GM12878 (cell line): ENCODE measurements at regions of chr5 and their contacts with region 1.

Region 1: DNA sequence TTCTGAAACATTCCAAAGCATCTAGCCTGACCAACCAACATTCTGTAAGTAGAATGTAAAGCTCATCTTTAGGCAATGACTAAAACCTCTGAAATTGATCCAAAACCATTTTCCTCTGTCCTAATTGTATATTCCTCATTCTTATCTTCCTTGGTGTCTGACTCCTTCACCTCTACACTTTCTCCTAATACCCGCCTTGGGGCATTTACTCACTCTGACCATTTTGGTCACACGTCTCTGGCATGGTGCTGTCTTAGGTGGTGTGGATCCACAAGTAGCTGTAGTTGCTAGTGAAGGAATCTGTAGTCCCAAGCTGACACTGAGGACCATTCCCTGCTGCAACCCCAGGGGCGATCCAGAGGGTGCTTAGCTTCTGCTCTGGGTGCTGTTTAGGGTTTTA is 40.8 kb upstream of the LMNB1 start:
- DNase-seq: no peak
- ATAC-seq: peak; percentile 28; the same call in 2 of the 3 replicates
- H3K4me3 ChIP-seq: no peak overlapping the region
- H3K27ac ChIP-seq: no peak overlapping the region
- H3K4me1 ChIP-seq: 0 out of 2 replicates have a peak, but pooled peaks cover 6% of the 10 kb centered on the region
- H3K27me3 ChIP-seq: no peaks in the 10 kb centered on the region
- CTCF ChIP-seq: no peak
- EP300 ChIP-seq: no peak
- POLR2A ChIP-seq: no peak
- RAD21 ChIP-seq: no peak

Region 2: GRCh38 chr5:126628102-126628501 is 108.0 kb before region 1 on chr5:
- CTCF ChIA-PET with region 1: no interaction called
- POLR2A ChIA-PET with region 1: no interaction called
- RAD21 ChIA-PET with region 1: no interaction called
- SMC1A ChIA-PET with region 1: no interaction called
- in situ Hi-C with region 1: no loop called
- intact Hi-C with region 1: no loop called
- DNase-seq: no peak
- ATAC-seq: no peak
- H3K4me3 ChIP-seq: no peak overlapping the region
- H3K27ac ChIP-seq: no peak overlapping the region
- H3K4me1 ChIP-seq: no peaks in the 10 kb centered on the region
- H3K27me3 ChIP-seq: no peaks in the 10 kb centered on the region
- CTCF ChIP-seq: no peak
- EP300 ChIP-seq: no peak
- POLR2A ChIP-seq: no peak
- RAD21 ChIP-seq: no peak

Region 3: DNA sequence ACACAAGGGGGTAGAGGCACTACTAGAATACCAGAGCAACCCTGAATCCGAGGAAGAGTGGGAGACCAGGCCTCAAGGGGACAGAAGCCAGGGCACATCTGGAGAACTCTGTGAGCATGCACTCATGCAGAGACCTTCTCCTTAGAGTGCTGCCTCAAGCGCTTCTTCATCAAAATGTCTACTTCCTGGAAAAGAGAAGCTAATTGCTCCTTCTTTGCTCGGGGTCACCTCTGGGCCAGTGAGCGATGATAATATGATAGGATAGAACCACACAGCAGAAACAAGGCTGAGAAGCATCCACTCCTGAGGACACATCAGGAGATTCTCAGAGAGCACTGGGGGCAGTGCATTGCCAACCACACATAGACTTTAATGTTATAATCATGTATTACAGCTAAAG is 17.1 kb after region 1 on chr5:
- CTCF ChIA-PET with region 1: interaction called, 5 read pairs
- POLR2A ChIA-PET with region 1: no interaction called
- RAD21 ChIA-PET with region 1: interaction called, 13 read pairs
- SMC1A ChIA-PET with region 1: interaction called, 9 read pairs
- in situ Hi-C with region 1: no loop called
- intact Hi-C with region 1: no loop called
- DNase-seq: no peak
- ATAC-seq: no peak
- H3K4me3 ChIP-seq: no peak overlapping the region
- H3K27ac ChIP-seq: no peak overlapping the region
- H3K4me1 ChIP-seq: peaks cover 14% of the 10 kb centered on the region
- H3K27me3 ChIP-seq: no peaks in the 10 kb centered on the region
- CTCF ChIP-seq: no peak
- EP300 ChIP-seq: no peak
- POLR2A ChIP-seq: no peak
- RAD21 ChIP-seq: no peak

Region 4: DNA sequence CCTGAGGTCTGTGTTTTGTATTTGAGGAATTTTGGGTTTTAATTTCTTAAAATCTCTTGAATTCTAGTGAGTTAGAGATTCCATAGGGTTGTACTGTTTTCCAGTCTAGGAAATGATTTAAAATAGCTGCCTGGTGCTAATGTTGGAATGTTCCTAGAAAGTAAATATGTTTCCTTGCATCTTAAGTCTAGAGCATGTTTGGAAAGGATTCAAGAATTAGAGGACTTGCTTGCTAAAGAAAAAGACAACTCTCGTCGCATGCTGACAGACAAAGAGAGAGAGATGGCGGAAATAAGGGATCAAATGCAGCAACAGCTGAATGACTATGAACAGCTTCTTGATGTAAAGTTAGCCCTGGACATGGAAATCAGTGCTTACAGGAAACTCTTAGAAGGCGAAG is 82.6 kb after region 1 on chr5:
- CTCF ChIA-PET with region 1: no interaction called
- POLR2A ChIA-PET with region 1: no interaction called
- RAD21 ChIA-PET with region 1: no interaction called
- SMC1A ChIA-PET with region 1: no interaction called
- in situ Hi-C with region 1: no loop called
- intact Hi-C with region 1: no loop called
- DNase-seq: no peak
- ATAC-seq: no peak
- H3K4me3 ChIP-seq: no peak overlapping the region
- H3K27ac ChIP-seq: no peak overlapping the region
- H3K4me1 ChIP-seq: no peaks in the 10 kb centered on the region
- H3K27me3 ChIP-seq: no peaks in the 10 kb centered on the region
- CTCF ChIP-seq: no peak
- EP300 ChIP-seq: no peak
- POLR2A ChIP-seq: no peak
- RAD21 ChIP-seq: no peak